ENCODE measurements at regions of chr12 and their contacts with region 1.

Region 1: GRCh38 chr12:1939801-1940607 is 21.6 kb upstream of the CACNA2D4 start:
- DNase-seq: peak; percentile 68
- H3K4me3 ChIP-seq: no peak overlapping the region
- H3K27ac ChIP-seq: no peak overlapping the region
- H3K27me3 ChIP-seq: no peaks in the 10 kb centered on the region
- CTCF ChIP-seq: peak; percentile 93

Region 2: GRCh38 chr12:1634590-1635191 is 305.3 kb before region 1 on chr12:
- CTCF ChIA-PET with region 1: interaction called, 28 read pairs
- POLR2A ChIA-PET with region 1: no interaction called
- DNase-seq: peak; percentile 49
- H3K4me3 ChIP-seq: no peak overlapping the region
- H3K27ac ChIP-seq: no peak overlapping the region
- H3K27me3 ChIP-seq: no peaks in the 10 kb centered on the region
- CTCF ChIP-seq: peak; percentile 92

Region 3: DNA sequence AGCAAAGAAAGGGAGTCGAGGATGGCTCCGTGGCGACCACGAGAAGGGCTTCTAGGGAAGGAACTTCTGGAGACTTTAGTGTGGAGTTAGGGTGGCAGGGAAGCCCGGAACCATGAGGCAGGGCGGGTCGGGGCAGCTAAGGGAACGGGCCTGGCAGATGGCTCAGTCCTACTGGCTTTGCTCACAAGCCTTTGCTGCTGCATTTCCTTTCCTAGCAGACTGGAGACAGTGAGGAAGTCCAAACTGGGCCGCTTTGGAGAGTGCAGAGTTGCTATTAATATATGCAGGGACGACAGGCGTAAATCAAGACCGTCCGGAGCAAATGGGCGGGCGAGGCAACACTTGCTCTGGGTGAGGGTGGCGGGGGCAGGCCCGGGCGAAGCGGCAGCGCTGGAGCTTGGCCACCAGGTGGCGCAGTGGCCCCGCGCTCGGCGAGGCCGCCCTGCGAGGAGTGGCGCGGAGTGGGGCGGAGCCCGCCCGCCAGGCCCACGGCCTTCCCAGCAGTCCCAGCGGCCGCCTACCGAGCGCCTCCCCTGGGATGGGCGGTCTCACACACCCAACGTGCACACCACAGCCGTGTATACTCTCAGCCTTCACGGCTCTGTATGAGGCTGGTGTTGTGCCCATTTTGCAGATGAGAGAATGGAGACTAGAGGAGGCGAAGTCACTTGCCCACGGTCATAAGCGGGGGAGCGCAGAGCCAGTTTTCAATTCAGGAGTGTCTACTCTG is 144.1 kb before region 1 on chr12:
- CTCF ChIA-PET with region 1: interaction called, 149 read pairs
- POLR2A ChIA-PET with region 1: interaction called, 7 read pairs
- DNase-seq: peak; percentile 71
- H3K4me3 ChIP-seq: peak overlapping the region; percentile 46
- H3K27ac ChIP-seq: no peak overlapping the region
- H3K27me3 ChIP-seq: peaks cover 3% of the 10 kb centered on the region
- CTCF ChIP-seq: peak; percentile 73

Region 4: GRCh38 chr12:1873531-1874510 is 66.2 kb before region 1 on chr12:
- CTCF ChIA-PET with region 1: interaction called, 13 read pairs
- POLR2A ChIA-PET with region 1: no interaction called
- DNase-seq: no peak
- H3K4me3 ChIP-seq: no peak overlapping the region
- H3K27ac ChIP-seq: no peak overlapping the region
- H3K27me3 ChIP-seq: peaks cover 72% of the 10 kb centered on the region
- CTCF ChIP-seq: no peak

Region 5: GRCh38 chr12:1966561-1967226 is 26.7 kb after region 1 on chr12:
- CTCF ChIA-PET with region 1: interaction called, 36 read pairs
- POLR2A ChIA-PET with region 1: no interaction called
- DNase-seq: no peak
- H3K4me3 ChIP-seq: no peak overlapping the region
- H3K27ac ChIP-seq: no peak overlapping the region
- H3K27me3 ChIP-seq: no peaks in the 10 kb centered on the region
- CTCF ChIP-seq: no peak

Region 6: GRCh38 chr12:2034633-2035430 is 94.8 kb after region 1 on chr12:
- CTCF ChIA-PET with region 1: interaction called, 11 read pairs
- POLR2A ChIA-PET with region 1: no interaction called
- DNase-seq: no peak
- H3K4me3 ChIP-seq: peak overlapping the region; percentile 55
- H3K27ac ChIP-seq: no peak overlapping the region
- H3K27me3 ChIP-seq: peaks cover 32% of the 10 kb centered on the region
- CTCF ChIP-seq: peak; percentile 72